Pancreas (tissue), 10 donors: ENCODE measurements at regions of chr2 and their contacts with region 1.

Region 1: DNA sequence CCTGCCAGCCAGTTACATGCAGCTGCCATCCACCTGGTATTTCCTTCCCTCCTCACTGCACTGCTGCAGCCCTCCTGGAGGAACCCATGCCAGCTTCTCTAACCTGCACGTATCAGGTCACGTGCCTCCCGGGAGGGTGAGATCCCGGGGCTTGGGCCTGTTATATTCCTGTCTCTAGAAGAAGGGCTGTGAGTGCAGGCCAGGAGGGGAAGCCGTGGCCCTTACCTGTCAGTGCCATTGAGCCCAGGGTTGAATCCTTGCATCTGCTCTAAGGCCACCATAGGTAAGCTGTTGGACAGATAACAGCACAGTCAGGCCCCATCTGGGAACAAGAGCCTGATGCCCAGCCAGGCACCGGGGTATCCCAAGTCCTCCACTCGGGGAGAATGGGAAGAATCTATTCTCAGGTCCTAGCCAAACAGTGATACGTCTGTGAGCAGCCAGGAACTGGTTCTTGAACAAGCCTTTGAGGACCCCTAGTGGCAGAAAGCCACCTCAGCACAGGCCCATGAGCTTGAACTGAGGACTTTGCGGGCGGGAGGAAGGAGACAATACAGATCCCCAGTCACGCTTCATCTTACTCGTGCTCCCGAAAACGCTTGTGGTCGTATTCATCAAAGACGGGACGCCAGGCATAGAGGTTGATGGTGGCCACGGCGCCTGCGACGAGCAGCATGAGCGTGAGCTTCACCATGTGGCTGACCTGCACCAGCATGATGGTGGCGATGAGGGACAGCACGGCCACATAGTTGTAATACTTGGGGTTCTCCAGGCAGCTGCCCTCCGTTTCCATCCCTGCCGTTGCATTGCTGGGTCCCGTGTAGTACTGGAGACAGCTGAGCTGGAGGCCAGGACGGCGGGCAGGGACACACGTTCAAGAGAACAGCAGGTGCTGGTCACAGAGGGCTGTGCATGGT is 34.4 kb downstream of the CENPO start:
- DNase-seq: peak in 5 of 6 donors; percentile 70 to 84 (median 77)
- ATAC-seq: peak; percentile 87 to 96 (median 94)
- H3K4me3 ChIP-seq: no peak overlapping the region
- H3K27ac ChIP-seq: no peak overlapping the region
- H3K4me1 ChIP-seq: no peaks in the 10 kb centered on the region
- H3K27me3 ChIP-seq: no peaks in the 10 kb centered on the region
- CTCF ChIP-seq: peak; percentile 74 to 86 (median 80)

Region 2: GRCh38 chr2:24409700-24410556 is 417.7 kb before region 1 on chr2:
- intact Hi-C with region 1: loop called in 2 of 3 experiments (anchors 5 kb)
- DNase-seq: peak in 2 of 6 donors; percentile 15 to 52
- ATAC-seq: peak; percentile 67 to 94 (median 92)
- H3K4me3 ChIP-seq: no peak overlapping the region
- H3K27ac ChIP-seq: no peak overlapping the region
- H3K4me1 ChIP-seq: no peaks in the 10 kb centered on the region
- H3K27me3 ChIP-seq: no peaks in the 10 kb centered on the region
- CTCF ChIP-seq: peak; percentile 45 to 80 (median 68)

Region 3: GRCh38 chr2:24421668-24422067 is 405.9 kb before region 1 on chr2:
- intact Hi-C with region 1: loop called in 1 of 3 experiments (anchors 5 kb)
- DNase-seq: peak in 3 of 6 donors; percentile 22 to 55 (median 54)
- ATAC-seq: peak; percentile 50 to 87 (median 78)
- H3K4me3 ChIP-seq: no peak overlapping the region
- H3K27ac ChIP-seq: no peak overlapping the region
- H3K4me1 ChIP-seq: no peaks in the 10 kb centered on the region
- H3K27me3 ChIP-seq: no peaks in the 10 kb centered on the region
- CTCF ChIP-seq: peak in 2 of 4 donors; percentile 17 to 24